ENCODE measurements at regions of chr11 and their contacts with region 1.

Region 1: GRCh38 chr11:96530473-96530872 is 140.7 kb downstream of the JRKL start:
- DNase-seq: no peak
- H3K4me3 ChIP-seq: no peak overlapping the region
- H3K27ac ChIP-seq: no peak overlapping the region
- H3K4me1 ChIP-seq: no peaks in the 10 kb centered on the region
- H3K27me3 ChIP-seq: no peaks in the 10 kb centered on the region
- CTCF ChIP-seq: no peak
- EP300 ChIP-seq: no peak
- POLR2A ChIP-seq: no peak

Region 2: DNA sequence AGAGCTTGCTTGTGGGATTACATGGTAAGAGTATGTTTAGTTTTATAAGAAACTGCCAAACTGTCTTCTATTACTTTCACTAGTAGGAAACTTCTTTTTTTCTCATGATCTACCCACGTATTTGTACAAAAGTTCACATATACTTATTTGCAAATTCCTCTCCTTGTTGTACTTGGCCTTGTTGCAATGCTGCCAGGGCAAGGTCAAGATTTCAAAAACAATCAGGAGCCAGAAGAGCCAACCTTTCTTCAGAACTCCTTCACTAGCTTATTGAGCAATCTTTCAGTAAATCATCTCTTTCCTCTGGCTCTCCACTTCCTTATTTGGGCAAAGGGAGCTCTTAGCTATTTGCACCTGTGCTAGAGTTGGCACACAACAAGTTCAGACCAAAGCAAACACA is 1454.1 kb before region 1 on chr11:
- in situ Hi-C with region 1: no loop called
- intact Hi-C with region 1: loop called (anchors 5 kb)
- DNase-seq: no peak
- H3K4me3 ChIP-seq: no peak overlapping the region
- H3K27ac ChIP-seq: no peak overlapping the region
- H3K4me1 ChIP-seq: peaks cover 5 to 23% (median 12%) of the 10 kb centered on the region in 4 donors
- H3K27me3 ChIP-seq: no peaks in the 10 kb centered on the region
- CTCF ChIP-seq: no peak
- EP300 ChIP-seq: no peak
- POLR2A ChIP-seq: no peak

Measured in transverse colon (tissue), 4 donors.